Activated CD4-positive, alpha-beta T cell treated with anti-CD3 and anti-CD28 coated beads, Interleukin-2, amount 10 ng/mL, durations not matched to agents 24 days and 14 days (primary cell): ENCODE measurements at regions of chr12 and their contacts with region 1.

Region 1: GRCh38 chr12:1795785-1796514 is 24.4 kb upstream of the LRTM2 start:
- DNase-seq: peak; percentile 98
- H3K4me3 Mint-ChIP-seq: peak overlapping the region; percentile 86
- H3K27ac Mint-ChIP-seq: peak overlapping the region; percentile 90
- H3K4me1 Mint-ChIP-seq: peaks cover 16% of the 10 kb centered on the region
- H3K27me3 Mint-ChIP-seq: no peaks in the 10 kb centered on the region

Region 2: GRCh38 chr12:1650260-1650977 is 145.5 kb before region 1 on chr12:
- intact Hi-C with region 1: loop called (anchors 1 kb)
- DNase-seq: no peak
- H3K4me3 Mint-ChIP-seq: no peak overlapping the region
- H3K27ac Mint-ChIP-seq: no peak overlapping the region
- H3K4me1 Mint-ChIP-seq: peaks cover 5% of the 10 kb centered on the region
- H3K27me3 Mint-ChIP-seq: peaks cover 40% of the 10 kb centered on the region

Region 3: DNA sequence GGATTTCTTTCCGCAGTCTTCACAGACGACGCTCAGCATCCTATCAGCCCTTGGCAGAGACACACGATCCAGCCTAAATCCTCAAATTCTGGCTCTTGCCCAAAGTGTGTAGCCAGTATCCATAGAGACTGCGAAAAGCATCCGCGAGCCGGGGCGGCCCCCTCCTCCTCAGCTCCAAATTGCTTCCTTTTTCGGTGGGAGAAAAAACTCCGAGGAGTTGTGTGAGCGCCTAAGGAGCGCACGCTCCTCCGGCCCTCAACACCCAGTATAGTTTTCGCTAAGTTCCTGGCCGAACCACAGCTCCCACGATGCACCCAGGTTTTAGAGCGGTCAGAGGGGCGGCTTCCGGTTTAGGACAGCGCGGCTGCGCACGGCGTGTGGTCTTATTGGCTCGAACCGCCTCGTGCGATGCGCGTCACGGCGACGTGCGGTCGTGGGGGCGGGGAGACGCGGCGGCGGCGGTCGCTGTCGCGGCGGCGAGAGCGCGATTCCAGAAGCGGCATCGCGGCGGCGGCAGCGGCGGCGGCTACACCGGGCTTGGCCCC is 105.3 kb before region 1 on chr12 and contains the start of gene ADIPOR2:
- intact Hi-C with region 1: loop called (anchors 1 kb)
- DNase-seq: peak; percentile 98
- H3K4me3 Mint-ChIP-seq: peak within 1 kb of the TSS; percentile 88
- H3K27ac Mint-ChIP-seq: peak within 1 kb of the TSS; percentile 99
- H3K4me1 Mint-ChIP-seq: peaks cover 28% of the 10 kb centered on the region
- H3K27me3 Mint-ChIP-seq: peaks cover 8% of the 10 kb centered on the region
- total RNA-seq, gene ADIPOR2: 68.7 and 71.2 TPM in 2 replicates

Region 4: GRCh38 chr12:2004113-2004929 is 208.4 kb after region 1 on chr12 and contains the start of gene DCP1B:
- intact Hi-C with region 1: loop called (anchors 10 kb)
- DNase-seq: peak; percentile 98
- H3K4me3 Mint-ChIP-seq: peak within 1 kb of the TSS; percentile 98
- H3K27ac Mint-ChIP-seq: peak within 1 kb of the TSS; percentile 98
- H3K4me1 Mint-ChIP-seq: peaks cover 22% of the 10 kb centered on the region
- H3K27me3 Mint-ChIP-seq: peaks cover 14% of the 10 kb centered on the region
- total RNA-seq, gene DCP1B: 9.9 and 10.4 TPM in 2 replicates

Region 5: DNA sequence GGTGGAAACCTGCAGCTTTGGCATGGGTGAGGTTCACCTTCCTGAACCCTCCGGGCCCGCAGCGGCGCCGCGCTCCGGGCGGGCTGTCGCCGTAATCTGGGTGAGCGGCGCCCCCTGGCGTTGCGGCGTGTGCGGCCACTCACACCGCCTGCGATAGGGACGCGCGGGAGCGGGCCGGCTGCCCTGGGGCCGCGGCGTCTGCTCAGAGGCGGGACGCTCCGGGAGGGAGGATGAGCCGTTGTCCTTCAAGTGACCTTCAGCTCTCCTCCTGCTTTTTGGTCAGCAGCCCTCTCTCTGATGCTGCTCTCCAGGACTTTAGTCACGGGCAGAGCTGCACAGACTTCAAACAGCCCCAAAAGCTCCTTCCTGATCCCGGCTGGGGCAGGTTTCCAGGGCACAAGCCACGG is 787.1 kb after region 1 on chr12:
- intact Hi-C with region 1: loop called (anchors 5 kb)
- DNase-seq: peak; percentile 90
- H3K4me3 Mint-ChIP-seq: no peak overlapping the region
- H3K27ac Mint-ChIP-seq: no peak overlapping the region
- H3K4me1 Mint-ChIP-seq: no peaks in the 10 kb centered on the region
- H3K27me3 Mint-ChIP-seq: peaks cover 36% of the 10 kb centered on the region